Panc1 (cell line): ENCODE measurements at regions of chr10 and their contacts with region 1.

Region 1: GRCh38 chr10:24201503-24202180 is 7.3 kb upstream of the KIAA1217 start:
- DNase-seq: no peak
- ATAC-seq: no peak
- H3K4me3 ChIP-seq: no peak overlapping the region
- H3K27ac ChIP-seq: no peak overlapping the region
- H3K4me1 ChIP-seq: no peaks in the 10 kb centered on the region
- H3K27me3 ChIP-seq: no peaks in the 10 kb centered on the region
- CTCF ChIP-seq: no peak

Region 2: DNA sequence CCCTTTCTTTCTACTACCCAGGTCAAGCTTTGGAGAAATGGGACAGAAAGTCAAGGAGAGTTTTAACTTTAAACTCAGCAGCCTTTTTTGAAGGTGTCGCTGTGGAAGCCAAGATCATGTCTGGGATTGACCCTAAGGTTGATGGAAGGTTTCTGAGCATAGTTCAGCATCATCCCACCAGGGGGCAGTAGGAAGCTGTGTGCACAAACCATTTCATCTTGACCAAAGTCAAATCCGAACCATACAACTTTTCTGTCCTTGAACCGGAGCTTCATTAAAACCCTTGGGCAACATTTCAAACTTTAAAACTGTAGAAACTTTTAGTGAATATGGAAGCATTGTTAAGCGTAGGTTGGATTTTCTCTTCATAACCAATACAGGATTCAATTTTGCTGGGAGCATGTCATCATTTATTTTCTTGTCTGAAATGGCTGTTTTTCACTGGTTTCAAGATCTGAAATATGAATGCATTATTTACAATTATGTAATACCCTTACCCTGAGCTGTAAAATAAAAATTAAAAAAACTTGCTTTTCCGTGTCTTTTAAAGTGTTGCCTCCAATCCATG is 207.1 kb before region 1 on chr10:
- CTCF ChIA-PET with region 1: interaction called, 3 read pairs
- POLR2A ChIA-PET with region 1: no interaction called
- in situ Hi-C with region 1: no loop called
- intact Hi-C with region 1: loop called (anchors 1 kb)
- DNase-seq: peak; percentile 38
- ATAC-seq: no peak
- H3K4me3 ChIP-seq: no peak overlapping the region
- H3K27ac ChIP-seq: no peak overlapping the region
- H3K4me1 ChIP-seq: no peaks in the 10 kb centered on the region
- H3K27me3 ChIP-seq: no peaks in the 10 kb centered on the region
- CTCF ChIP-seq: peak; percentile 77